Activated B cell treated with CpG ODN at 0.5 μM for 24 hours (primary cell): ENCODE measurements at regions of chr2 and their contacts with region 1.

Region 1: DNA sequence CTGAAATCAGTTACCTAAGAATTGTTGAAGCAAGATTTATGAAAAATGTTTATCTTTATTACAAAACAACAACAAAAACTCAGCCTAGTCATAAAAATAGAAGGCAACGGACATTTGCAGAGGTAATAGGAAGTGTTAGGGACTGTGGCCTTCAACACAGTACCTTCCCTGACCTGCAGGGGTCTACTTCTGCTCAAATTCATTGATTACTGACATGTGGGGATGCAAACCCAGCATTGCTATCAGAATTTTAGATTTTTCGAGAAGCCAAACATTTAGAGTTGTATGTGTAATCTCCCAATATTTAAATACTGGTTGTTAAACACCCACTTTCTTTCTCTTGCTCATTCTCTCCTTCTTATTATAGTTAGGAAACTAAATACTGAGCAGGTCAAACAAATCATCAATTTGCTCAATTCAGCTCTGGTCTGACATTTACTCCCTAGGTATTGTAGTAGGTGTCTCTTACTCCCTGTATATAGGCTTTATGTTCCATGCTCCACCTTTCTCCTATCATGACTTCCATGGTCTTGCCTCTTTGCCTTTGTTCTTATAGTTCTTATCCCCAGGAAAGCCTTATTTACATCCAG is 198.5 kb downstream of the UBE2E3 start:
- DNase-seq: no peak
- ATAC-seq: peak; percentile 82
- H3K4me3 Mint-ChIP-seq: no peak overlapping the region
- H3K27ac Mint-ChIP-seq: no peak overlapping the region
- H3K4me1 Mint-ChIP-seq: peaks cover 7% of the 10 kb centered on the region
- H3K27me3 Mint-ChIP-seq: no peaks in the 10 kb centered on the region
- CTCF ChIP-seq: peak; percentile 42

Region 2: DNA sequence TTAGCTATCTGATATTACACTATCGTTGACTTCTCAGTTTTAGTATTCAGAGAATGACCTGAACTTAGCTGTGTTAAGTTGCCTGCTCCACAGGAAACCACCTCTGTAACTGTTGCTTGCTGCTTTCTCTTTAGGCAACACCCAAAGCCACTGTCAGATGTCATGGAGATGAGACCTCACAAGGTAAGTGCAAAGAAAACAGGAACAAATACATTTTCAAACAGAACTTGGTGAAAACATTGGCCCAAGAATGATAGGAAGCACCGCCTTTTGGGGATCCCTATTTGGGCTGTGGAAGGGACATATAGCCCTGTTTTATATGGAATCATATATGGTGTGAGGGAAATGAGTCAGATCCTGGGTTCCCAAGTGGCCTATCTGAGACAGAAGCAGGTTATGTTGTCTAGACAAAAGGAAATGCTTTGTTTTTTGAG is 55.1 kb before region 1 on chr2:
- CTCF ChIA-PET with region 1: no interaction called
- POLR2A ChIA-PET with region 1: no interaction called
- intact Hi-C with region 1: loop called (anchors 5 kb)
- DNase-seq: no peak
- ATAC-seq: peak; percentile 80
- H3K4me3 Mint-ChIP-seq: no peak overlapping the region
- H3K27ac Mint-ChIP-seq: peak overlapping the region; percentile 33
- H3K4me1 Mint-ChIP-seq: peaks cover 8% of the 10 kb centered on the region
- H3K27me3 Mint-ChIP-seq: no peaks in the 10 kb centered on the region
- CTCF ChIP-seq: no peak